ENCODE measurements at regions of chr22 and their contacts with region 1.

Region 1: GRCh38 chr22:28917747-28918549 is 34.6 kb downstream of the ZNRF3 start:
- DNase-seq: no peak
- ATAC-seq: peak; percentile 27
- H3K4me3 ChIP-seq: no peak overlapping the region
- H3K27ac ChIP-seq: no peak overlapping the region
- H3K4me1 ChIP-seq: peaks cover 8% of the 10 kb centered on the region
- H3K27me3 ChIP-seq: no peaks in the 10 kb centered on the region; a peak in 1 of 4 replicates
- CTCF ChIP-seq: no peak; a peak in 1 of 6 replicates
- EP300 ChIP-seq: no peak
- POLR2A ChIP-seq: no peak
- RAD21 ChIP-seq: no peak

Region 2: DNA sequence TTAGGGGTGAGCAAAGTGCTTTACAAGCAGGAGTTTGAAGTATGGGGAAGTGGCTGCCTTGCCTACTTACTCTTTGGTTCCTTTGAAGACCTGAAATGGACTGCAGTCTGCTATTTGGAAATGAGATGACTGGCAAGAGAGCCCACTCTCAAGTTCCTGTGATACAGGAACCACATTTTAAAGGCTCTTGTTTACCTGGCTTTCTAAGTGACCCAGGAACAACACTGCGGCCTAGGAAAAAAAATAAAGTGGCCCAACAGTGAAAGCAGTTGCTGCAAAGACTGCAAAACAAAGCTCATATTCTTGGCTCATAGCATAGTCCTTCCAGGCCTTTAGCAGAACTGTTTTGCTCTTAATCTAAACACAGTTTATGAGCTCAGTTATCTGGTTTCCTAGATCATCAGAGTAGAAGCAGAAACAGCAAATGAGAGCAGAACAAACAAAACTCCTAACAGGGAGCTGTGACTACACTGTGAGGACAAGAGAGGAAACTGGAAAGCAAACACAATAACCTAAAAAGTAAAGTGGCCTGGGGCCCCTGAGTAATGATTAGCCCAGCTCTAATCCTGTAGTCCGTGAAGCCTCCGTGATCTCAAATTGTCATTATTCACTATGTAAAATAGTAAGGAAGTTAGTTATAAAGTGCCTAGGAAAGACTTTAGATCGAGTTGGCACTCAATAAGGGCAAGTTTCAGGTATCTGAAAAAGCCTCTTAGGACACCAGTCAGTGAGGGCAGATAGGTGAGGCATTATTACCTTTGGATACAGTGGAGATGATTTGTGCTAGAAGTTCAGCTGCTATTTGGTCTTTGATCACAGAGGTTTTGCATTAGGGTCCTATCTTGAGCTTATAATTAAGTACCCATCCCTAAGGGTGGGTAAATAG is 133.9 kb before region 1 on chr22:
- CTCF ChIA-PET with region 1: no interaction called
- POLR2A ChIA-PET with region 1: no interaction called
- RAD21 ChIA-PET with region 1: no interaction called
- SMC1A ChIA-PET with region 1: no interaction called
- in situ Hi-C with region 1: no loop called
- intact Hi-C with region 1: no loop called
- DNase-seq: no peak
- ATAC-seq: no peak
- H3K4me3 ChIP-seq: no peak overlapping the region
- H3K27ac ChIP-seq: no peak overlapping the region
- H3K4me1 ChIP-seq: no peaks in the 10 kb centered on the region
- H3K27me3 ChIP-seq: no peaks in the 10 kb centered on the region
- CTCF ChIP-seq: no peak
- EP300 ChIP-seq: no peak
- POLR2A ChIP-seq: no peak
- RAD21 ChIP-seq: no peak

Region 3: DNA sequence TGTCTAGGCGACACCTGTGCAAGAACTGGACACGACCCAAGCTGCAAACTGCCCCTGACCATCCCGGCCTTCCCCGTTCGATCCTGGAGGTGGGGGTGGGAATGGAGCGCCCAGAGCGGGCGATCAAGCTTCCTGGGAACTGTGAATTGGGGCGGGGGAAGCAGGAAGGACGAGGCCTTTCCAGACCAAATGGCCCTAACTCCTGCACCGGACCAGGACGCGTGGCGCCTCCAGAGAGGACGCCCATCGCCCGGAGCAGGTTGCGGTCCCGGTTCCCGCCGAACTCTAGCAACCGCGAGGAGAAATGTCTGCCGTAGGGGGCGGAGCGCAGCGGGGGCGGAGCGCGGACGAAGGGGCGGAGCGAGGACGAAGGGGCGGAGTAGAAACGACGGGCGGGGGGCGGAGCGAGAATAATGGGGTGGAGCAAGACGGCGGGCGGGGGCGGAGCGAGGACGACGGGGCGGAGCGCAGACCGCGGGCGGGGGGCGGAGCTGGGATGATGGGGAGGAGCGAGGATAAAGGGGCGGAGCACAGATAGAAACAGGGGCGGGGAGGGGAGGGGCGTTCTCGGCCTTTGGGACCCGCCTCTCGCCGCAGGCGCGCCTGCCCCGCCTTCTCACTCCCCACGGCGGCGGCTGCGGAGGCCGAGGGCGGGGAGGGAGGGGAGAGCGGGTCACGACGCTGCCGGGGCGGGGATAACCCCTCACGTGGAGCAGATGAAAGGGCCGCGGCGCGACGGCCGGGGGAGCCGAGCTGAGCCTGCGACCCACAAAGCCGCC is 34.9 kb before region 1 on chr22 and contains the start of gene ZNRF3:
- CTCF ChIA-PET with region 1: interaction called, 8 read pairs
- POLR2A ChIA-PET with region 1: interaction called, 5 read pairs
- RAD21 ChIA-PET with region 1: interaction called, 65 read pairs
- SMC1A ChIA-PET with region 1: interaction called, 21 read pairs
- in situ Hi-C with region 1: no loop called
- intact Hi-C with region 1: no loop called
- DNase-seq: no peak
- ATAC-seq: peak; percentile 89
- H3K4me3 ChIP-seq: peak within 1 kb of the TSS; percentile 57; the same call in 1 of the 2 replicates
- H3K27ac ChIP-seq: no peak within 1 kb of the TSS
- H3K4me1 ChIP-seq: no peaks in the 10 kb centered on the region
- H3K27me3 ChIP-seq: peaks cover 0 to 5% of the 10 kb centered on the region in 2 experiments; a peak in 1 of 4 replicates
- CTCF ChIP-seq: no peak
- EP300 ChIP-seq: no peak
- POLR2A ChIP-seq: peak; percentile 50; the same call in 1 of the 2 replicates
- RAD21 ChIP-seq: no peak
- polyA plus RNA-seq, gene ZNRF3: 0.10 to 0.13 TPM

Region 4: DNA sequence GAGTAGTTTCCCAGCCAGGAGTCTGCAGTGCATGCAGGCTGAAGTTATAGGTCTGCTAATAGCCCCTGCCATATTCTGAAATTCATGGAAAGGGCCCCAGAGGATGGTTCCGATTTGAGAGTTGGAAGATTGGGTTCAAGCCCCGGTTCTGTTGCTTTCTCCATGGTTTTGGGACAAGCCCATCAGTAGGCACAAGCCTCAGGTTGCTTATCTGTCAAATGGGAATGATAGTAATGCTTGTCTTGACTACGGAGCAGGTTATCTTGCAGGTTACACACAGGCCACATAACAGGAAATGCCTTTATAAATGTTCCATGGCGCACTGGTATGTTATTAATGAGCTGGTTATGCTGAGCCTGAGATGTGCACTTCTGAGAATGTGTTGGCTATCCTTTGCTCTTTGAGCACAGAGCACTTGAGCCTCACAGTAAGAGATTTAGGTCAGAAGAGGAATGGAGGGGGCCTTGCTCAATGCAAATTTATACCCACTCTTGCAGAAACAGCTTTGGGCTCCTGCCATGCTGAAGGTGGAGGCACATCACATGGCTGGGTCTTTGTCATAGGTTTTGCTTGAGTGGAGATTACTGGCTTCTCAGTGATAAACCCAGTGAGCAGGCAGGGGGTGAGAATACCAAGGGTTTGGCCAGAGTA is 12.5 kb after region 1 on chr22:
- CTCF ChIA-PET with region 1: interaction called, 42 read pairs
- POLR2A ChIA-PET with region 1: interaction called, 13 read pairs
- RAD21 ChIA-PET with region 1: interaction called, 64 read pairs
- SMC1A ChIA-PET with region 1: interaction called, 42 read pairs
- in situ Hi-C with region 1: no loop called
- intact Hi-C with region 1: no loop called
- DNase-seq: no peak
- ATAC-seq: peak; percentile 84
- H3K4me3 ChIP-seq: no peak overlapping the region
- H3K27ac ChIP-seq: no peak overlapping the region
- H3K4me1 ChIP-seq: no peaks in the 10 kb centered on the region; the same call in 1 of the 2 replicates
- H3K27me3 ChIP-seq: peaks cover 0 to 6% of the 10 kb centered on the region in 2 experiments; a peak in 1 of 4 replicates
- CTCF ChIP-seq: no peak
- EP300 ChIP-seq: no peak
- POLR2A ChIP-seq: no peak
- RAD21 ChIP-seq: no peak

Region 5: DNA sequence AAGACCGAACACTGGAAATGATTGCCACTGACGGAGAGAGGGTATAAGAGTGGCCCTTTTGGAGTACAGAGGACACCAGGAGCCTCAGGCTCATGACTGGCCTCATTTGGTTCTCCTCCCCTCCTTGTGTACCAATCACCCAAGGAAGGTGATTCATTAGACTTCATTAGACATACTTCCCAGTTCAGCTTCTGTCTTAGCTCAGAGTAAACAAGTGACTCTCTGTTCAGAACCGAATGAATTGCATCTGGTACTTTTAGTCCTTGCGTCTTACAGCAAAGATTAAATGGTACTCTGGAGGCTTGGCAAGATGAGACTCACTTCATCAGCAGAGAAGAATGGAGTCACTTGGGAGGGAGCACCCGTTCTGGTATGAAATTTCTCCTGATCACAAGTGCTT is 40.7 kb after region 1 on chr22:
- CTCF ChIA-PET with region 1: interaction called, 7 read pairs
- POLR2A ChIA-PET with region 1: interaction called, 4 read pairs
- RAD21 ChIA-PET with region 1: interaction called, 4 read pairs
- SMC1A ChIA-PET with region 1: interaction called, 11 read pairs
- in situ Hi-C with region 1: no loop called
- intact Hi-C with region 1: no loop called
- DNase-seq: no peak
- ATAC-seq: no peak
- H3K4me3 ChIP-seq: no peak overlapping the region
- H3K27ac ChIP-seq: no peak overlapping the region
- H3K4me1 ChIP-seq: peaks cover 18% of the 10 kb centered on the region
- H3K27me3 ChIP-seq: peaks cover 0 to 2% of the 10 kb centered on the region in 2 experiments; a peak in 1 of 4 replicates
- CTCF ChIP-seq: no peak
- EP300 ChIP-seq: no peak
- POLR2A ChIP-seq: no peak
- RAD21 ChIP-seq: no peak

Region 6: DNA sequence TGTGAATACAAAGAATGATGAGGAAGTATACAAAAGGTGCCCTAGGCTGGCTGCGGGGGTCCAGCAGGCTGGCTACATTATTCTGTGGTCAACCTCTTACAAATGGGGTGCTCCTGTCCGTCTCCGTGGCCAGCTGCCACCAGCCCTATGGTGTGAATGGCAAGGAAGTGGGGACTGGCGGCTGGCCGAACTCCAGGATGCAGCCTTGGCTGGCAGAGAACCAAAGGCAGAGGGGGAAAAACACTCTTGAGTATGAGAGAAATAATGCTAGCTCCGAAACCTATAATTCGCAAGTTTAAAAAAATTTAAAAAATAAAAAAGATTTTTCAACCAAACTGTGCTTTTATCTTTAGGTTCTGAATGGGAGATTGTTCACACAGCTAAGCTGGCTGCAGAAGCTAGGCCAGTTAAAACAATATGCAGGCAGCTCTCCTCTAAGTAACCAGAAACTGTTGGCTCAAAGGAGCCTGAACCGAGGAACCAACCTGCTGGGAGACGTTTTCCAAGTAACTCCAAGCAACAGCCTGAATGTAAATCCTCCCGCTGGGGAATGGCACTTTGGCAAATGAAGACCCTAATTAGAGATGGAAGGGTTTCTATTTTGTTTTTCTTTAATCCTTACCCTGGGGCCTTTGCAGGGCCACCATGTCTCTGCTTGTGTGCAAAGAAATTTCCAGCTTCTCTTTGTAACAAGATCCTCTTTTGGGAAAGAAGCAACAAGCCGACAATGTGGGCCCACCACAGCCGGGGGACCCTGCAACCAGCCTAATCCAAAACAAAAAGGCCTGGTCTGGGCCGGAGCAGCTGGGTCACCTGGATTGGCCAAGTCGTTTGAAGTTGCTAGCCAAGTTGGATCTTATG is 93.5 kb after region 1 on chr22:
- CTCF ChIA-PET with region 1: interaction called, 3 read pairs
- POLR2A ChIA-PET with region 1: interaction called, 6 read pairs
- RAD21 ChIA-PET with region 1: interaction called, 49 read pairs
- SMC1A ChIA-PET with region 1: interaction called, 10 read pairs
- in situ Hi-C with region 1: no loop called
- intact Hi-C with region 1: no loop called
- DNase-seq: no peak
- ATAC-seq: no peak
- H3K4me3 ChIP-seq: no peak overlapping the region
- H3K27ac ChIP-seq: no peak overlapping the region
- H3K4me1 ChIP-seq: no peaks in the 10 kb centered on the region
- H3K27me3 ChIP-seq: 0 out of 4 replicates have a peak, but pooled peaks cover 0 to 2% of the 10 kb centered on the region in 2 experiments
- CTCF ChIP-seq: no peak
- EP300 ChIP-seq: no peak
- POLR2A ChIP-seq: no peak
- RAD21 ChIP-seq: no peak

Region 7: DNA sequence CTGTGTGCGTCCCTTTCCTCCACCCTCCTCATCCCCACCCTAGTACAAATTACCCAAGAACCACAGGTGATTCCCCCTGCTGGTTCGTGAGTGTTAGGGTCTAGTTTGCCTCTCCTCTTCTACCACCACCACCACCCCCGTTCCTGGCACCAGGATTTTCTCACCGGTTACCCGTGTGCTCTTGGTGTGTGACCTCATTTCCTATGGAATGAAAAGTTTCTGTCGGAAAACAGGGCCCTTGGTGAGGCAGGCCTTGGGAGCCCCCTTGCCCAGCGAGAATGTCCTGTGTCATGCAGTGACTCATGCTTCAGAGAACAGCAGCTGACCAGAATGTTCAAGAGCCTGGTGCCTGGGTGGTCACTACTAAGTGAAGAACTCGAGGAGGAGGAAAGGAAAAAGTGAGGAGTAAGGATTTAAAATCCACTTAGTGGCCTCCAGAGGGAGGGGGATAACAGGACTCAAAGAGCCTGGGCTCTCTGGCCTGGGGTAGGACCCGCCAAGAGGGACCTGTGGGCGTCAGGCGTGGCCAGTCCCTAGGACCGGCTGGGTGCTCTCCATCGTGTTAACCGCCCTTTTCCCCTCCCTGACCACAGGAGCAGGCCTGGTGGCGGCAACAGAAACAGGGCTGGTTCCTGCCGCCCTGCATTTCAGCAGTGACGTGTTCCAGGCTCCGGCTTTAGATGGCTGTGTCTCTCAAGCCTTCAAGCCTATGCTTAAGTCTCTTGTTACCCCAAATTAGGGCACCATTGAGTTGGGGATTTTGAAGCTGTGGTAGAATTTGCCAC is 113.5 kb after region 1 on chr22:
- CTCF ChIA-PET with region 1: interaction called, 87 read pairs
- POLR2A ChIA-PET with region 1: interaction called, 3 read pairs
- RAD21 ChIA-PET with region 1: interaction called, 84 read pairs
- SMC1A ChIA-PET with region 1: interaction called, 43 read pairs
- in situ Hi-C with region 1: no loop called
- intact Hi-C with region 1: no loop called
- DNase-seq: no peak
- ATAC-seq: peak; percentile 69
- H3K4me3 ChIP-seq: no peak overlapping the region
- H3K27ac ChIP-seq: no peak overlapping the region
- H3K4me1 ChIP-seq: no peaks in the 10 kb centered on the region
- H3K27me3 ChIP-seq: 0 out of 4 replicates have a peak, but pooled peaks cover 0 to 6% of the 10 kb centered on the region in 2 experiments
- CTCF ChIP-seq: no peak
- EP300 ChIP-seq: no peak
- POLR2A ChIP-seq: no peak
- RAD21 ChIP-seq: no peak